ENCODE measurements at regions of chr19 and their contacts with region 1.

Region 1: DNA sequence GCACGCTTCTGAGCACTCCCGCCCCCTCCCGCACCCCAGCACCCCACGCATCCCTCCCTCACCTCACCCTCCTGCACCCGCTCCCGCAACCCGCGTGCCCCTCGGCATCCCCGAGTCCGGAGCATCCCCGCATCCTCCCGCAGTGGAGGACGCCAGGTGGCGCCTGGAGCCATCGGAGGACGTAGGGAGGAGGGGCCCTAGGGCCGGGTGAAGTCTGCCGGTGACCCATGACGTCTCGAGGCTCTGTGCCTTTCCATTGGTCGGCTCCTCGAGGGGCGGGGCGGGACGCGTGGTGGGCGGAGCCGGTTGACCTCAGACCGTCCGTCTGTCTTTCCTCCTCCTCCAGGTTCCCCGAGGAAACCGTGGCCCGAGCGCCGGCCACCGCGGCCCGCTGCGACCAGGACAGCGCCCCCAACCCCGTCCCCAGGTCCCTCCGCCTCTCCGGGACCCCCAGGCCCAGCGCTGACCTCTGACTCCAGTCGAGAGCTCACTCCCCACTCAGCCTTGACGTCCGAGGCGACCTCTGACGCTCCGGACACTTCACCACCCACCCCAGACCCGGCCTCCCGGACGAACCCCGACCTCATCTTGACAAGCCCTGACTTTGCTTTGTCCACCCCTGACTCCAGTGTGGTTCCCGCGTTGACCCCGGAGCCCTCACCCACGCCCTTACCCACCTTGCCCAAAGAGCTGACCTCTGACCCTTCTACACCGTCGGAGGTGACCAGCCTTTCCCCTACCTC is 19.9 kb downstream of the SBK2 start:
- DNase-seq: peak; percentile 94 to 97
- H3K4me3 ChIP-seq: peak overlapping the region; percentile 31
- H3K4me3 Mint-ChIP-seq: peak overlapping the region; percentile 72
- H3K27ac Mint-ChIP-seq: peak overlapping the region; percentile 77
- H3K4me1 ChIP-seq: peaks cover 8% of the 10 kb centered on the region
- H3K4me1 Mint-ChIP-seq: no peaks in the 10 kb centered on the region
- H3K27me3 ChIP-seq: no peaks in the 10 kb centered on the region
- H3K27me3 Mint-ChIP-seq: peaks cover 5% of the 10 kb centered on the region
- CTCF ChIP-seq: peak; percentile 89 to 98

Region 2: GRCh38 chr19:55580628-55581144 is 63.6 kb after region 1 on chr19 and contains the start of gene ZNF579:
- CTCF ChIA-PET with region 1: interaction called, 3 read pairs
- POLR2A ChIA-PET with region 1: no interaction called
- intact Hi-C with region 1: loop called (anchors 2 kb)
- DNase-seq: peak; percentile 93
- H3K4me3 ChIP-seq: peak within 1 kb of the TSS; percentile 68
- H3K4me3 Mint-ChIP-seq: peak within 1 kb of the TSS; percentile 85
- H3K27ac Mint-ChIP-seq: peak within 1 kb of the TSS; percentile 46
- H3K4me1 ChIP-seq: peaks cover 19% of the 10 kb centered on the region
- H3K4me1 Mint-ChIP-seq: peaks cover 27% of the 10 kb centered on the region
- H3K27me3 ChIP-seq: no peaks in the 10 kb centered on the region
- H3K27me3 Mint-ChIP-seq: no peaks in the 10 kb centered on the region
- CTCF ChIP-seq: no peak
- total RNA-seq, gene ZNF579: 26.5 and 30.4 TPM in 2 replicates

Region 3: DNA sequence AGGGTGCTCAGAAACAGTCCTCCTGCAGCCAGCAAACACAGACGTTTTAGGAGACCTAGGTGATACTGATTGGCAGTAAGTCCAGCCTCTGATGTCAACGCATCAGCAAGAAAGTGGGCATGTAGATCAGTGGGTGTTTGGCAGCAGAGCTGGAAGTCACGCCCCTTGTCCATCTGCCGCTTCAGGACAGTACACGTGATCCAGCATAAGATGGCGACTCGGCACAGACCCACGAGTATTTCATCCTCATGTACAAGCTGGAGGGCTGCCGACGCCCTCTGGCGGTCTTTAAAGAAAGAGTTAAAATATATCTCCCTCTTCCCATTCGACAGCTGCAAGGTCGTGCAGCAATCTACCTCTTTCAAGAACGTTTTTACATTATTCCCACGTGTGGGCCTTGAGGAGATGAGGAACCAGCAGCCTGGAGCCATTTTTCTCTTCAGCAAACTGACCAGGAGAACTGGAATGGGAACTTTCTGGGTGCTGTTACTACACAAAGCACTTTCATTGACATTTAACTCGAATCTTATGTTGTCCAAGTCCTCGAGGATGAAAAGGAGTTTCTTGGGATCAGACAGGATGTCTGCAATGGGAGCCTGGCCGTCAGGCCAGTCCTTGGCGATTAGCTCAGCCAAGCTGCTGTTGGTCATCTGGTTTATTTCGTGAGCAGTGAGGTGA is 292.5 kb after region 1 on chr19:
- CTCF ChIA-PET with region 1: no interaction called
- POLR2A ChIA-PET with region 1: no interaction called
- intact Hi-C with region 1: no loop called
- DNase-seq: peak; percentile 73 to 86
- H3K4me3 ChIP-seq: no peak overlapping the region
- H3K4me3 Mint-ChIP-seq: no peak overlapping the region
- H3K27ac Mint-ChIP-seq: no peak overlapping the region
- H3K4me1 ChIP-seq: 0 out of 2 replicates have a peak, but pooled peaks cover 4% of the 10 kb centered on the region
- H3K4me1 Mint-ChIP-seq: no peaks in the 10 kb centered on the region
- H3K27me3 ChIP-seq: no peaks in the 10 kb centered on the region
- H3K27me3 Mint-ChIP-seq: peaks cover 26% of the 10 kb centered on the region
- CTCF ChIP-seq: peak; percentile 40 to 67

Measured in Caco-2 (cell line).